Cardiac septum (tissue), 1 donor: ENCODE measurements at regions of chr6 and their contacts with region 1.

Region 1: GRCh38 chr6:40419372-40419771 is 167.8 kb downstream of the LRFN2 start:
- DNase-seq: no peak

Region 2: GRCh38 chr6:40395066-40395704 is 24.2 kb before region 1 on chr6:
- intact Hi-C with region 1: no loop called
- DNase-seq: peak; percentile 38

Region 3: GRCh38 chr6:40520678-40521077 is 101.3 kb after region 1 on chr6:
- intact Hi-C with region 1: loop called (anchors 5 kb)
- DNase-seq: no peak